ENCODE measurements at regions of chr1 and their contacts with region 1.

Region 1: GRCh38 chr1:210311726-210312493 is 16.8 kb upstream of the HHAT start:
- DNase-seq: no peak
- H3K4me3 ChIP-seq: no peak overlapping the region
- CTCF ChIP-seq: no peak

Region 2: GRCh38 chr1:210151052-210151672 is 160.7 kb before region 1 on chr1:
- CTCF ChIA-PET with region 1: interaction called, 14 read pairs
- POLR2A ChIA-PET with region 1: no interaction called
- DNase-seq: no peak
- H3K4me3 ChIP-seq: no peak overlapping the region
- CTCF ChIP-seq: no peak

Region 3: GRCh38 chr1:210292231-210292871 is 19.6 kb before region 1 on chr1:
- CTCF ChIA-PET with region 1: interaction called, 12 read pairs
- POLR2A ChIA-PET with region 1: no interaction called
- DNase-seq: no peak
- H3K4me3 ChIP-seq: peak overlapping the region; percentile 40
- CTCF ChIP-seq: peak; percentile 3

Region 4: GRCh38 chr1:210301615-210302000 is 10.3 kb before region 1 on chr1:
- CTCF ChIA-PET with region 1: interaction called, 37 read pairs
- POLR2A ChIA-PET with region 1: no interaction called
- DNase-seq: no peak
- H3K4me3 ChIP-seq: no peak overlapping the region
- CTCF ChIP-seq: no peak

Region 5: GRCh38 chr1:210754878-210755665 is 443.2 kb after region 1 on chr1:
- CTCF ChIA-PET with region 1: no interaction called
- POLR2A ChIA-PET with region 1: no interaction called
- DNase-seq: no peak
- H3K4me3 ChIP-seq: no peak overlapping the region
- CTCF ChIP-seq: no peak

Measured in AG04449 (cell line).